ENCODE measurements at regions of chr11 and their contacts with region 1.

Region 1: GRCh38 chr11:27183672-27184457 is 143.2 kb downstream of the BBOX1 start:
- DNase-seq: peak in 1 of 2 donors; percentile 59
- ATAC-seq: peak in 7 of 8 donors; percentile 37 to 70 (median 42)
- H3K4me3 ChIP-seq: no peak overlapping the region
- H3K27ac ChIP-seq: no peak overlapping the region
- H3K4me1 ChIP-seq: peaks cover 0 to 7% (median 0%) of the 10 kb centered on the region in 9 donors
- H3K27me3 ChIP-seq: peaks cover 0 to 4% (median 0%) of the 10 kb centered on the region in 7 donors
- CTCF ChIP-seq: peak; percentile 61 to 84 (median 75)

Region 2: GRCh38 chr11:26878959-26879581 is 304.8 kb before region 1 on chr11:
- intact Hi-C with region 1: no loop called
- DNase-seq: no peak
- ATAC-seq: no peak
- H3K4me3 ChIP-seq: no peak overlapping the region
- H3K27ac ChIP-seq: no peak overlapping the region
- H3K4me1 ChIP-seq: no peaks in the 10 kb centered on the region
- H3K27me3 ChIP-seq: no peaks in the 10 kb centered on the region
- CTCF ChIP-seq: no peak

Region 3: GRCh38 chr11:27296497-27296896 is 112.6 kb after region 1 on chr11:
- intact Hi-C with region 1: loop called in 8 of 10 experiments (anchors 1 to 10 kb)
- DNase-seq: no peak
- ATAC-seq: peak in 4 of 8 donors; percentile 44 to 76 (median 65)
- H3K4me3 ChIP-seq: no peak overlapping the region
- H3K27ac ChIP-seq: peak overlapping the region in 4 of 10 donors; percentile 10 to 65 (median 45)
- H3K4me1 ChIP-seq: peaks cover 0 to 13% (median 0%) of the 10 kb centered on the region in 9 donors
- H3K27me3 ChIP-seq: no peaks in the 10 kb centered on the region
- CTCF ChIP-seq: peak in 8 of 9 donors; percentile 35 to 74 (median 62)

Region 4: GRCh38 chr11:27331981-27332380 is 148.1 kb after region 1 on chr11:
- intact Hi-C with region 1: no loop called
- DNase-seq: no peak
- ATAC-seq: no peak
- H3K4me3 ChIP-seq: no peak overlapping the region
- H3K27ac ChIP-seq: no peak overlapping the region
- H3K4me1 ChIP-seq: no peaks in the 10 kb centered on the region
- H3K27me3 ChIP-seq: no peaks in the 10 kb centered on the region
- CTCF ChIP-seq: no peak

Region 5: GRCh38 chr11:27357250-27357649 is 173.4 kb after region 1 on chr11:
- intact Hi-C with region 1: loop called in 1 of 10 experiments (anchors 5 kb)
- DNase-seq: no peak
- ATAC-seq: no peak
- H3K4me3 ChIP-seq: no peak overlapping the region
- H3K27ac ChIP-seq: no peak overlapping the region
- H3K4me1 ChIP-seq: peaks cover 0 to 14% (median 2%) of the 10 kb centered on the region in 9 donors
- H3K27me3 ChIP-seq: no peaks in the 10 kb centered on the region
- CTCF ChIP-seq: no peak

Region 6: GRCh38 chr11:27472398-27473016 is 288.6 kb after region 1 on chr11 and contains the start of gene LGR4:
- intact Hi-C with region 1: no loop called
- DNase-seq: peak; percentile 89 to 94
- ATAC-seq: peak; percentile 95 to 98 (median 96)
- H3K4me3 ChIP-seq: peak within 1 kb of the TSS; percentile 64 to 97 (median 82)
- H3K27ac ChIP-seq: peak within 1 kb of the TSS; percentile 82 to 97 (median 90)
- H3K4me1 ChIP-seq: peaks cover 0 to 46% (median 19%) of the 10 kb centered on the region in 9 donors
- H3K27me3 ChIP-seq: peaks cover 0 to 10% (median 0%) of the 10 kb centered on the region in 7 donors
- CTCF ChIP-seq: no peak
- total RNA-seq, gene LGR4: 13.6 to 41.0 (median 23.3) TPM

Region 7: DNA sequence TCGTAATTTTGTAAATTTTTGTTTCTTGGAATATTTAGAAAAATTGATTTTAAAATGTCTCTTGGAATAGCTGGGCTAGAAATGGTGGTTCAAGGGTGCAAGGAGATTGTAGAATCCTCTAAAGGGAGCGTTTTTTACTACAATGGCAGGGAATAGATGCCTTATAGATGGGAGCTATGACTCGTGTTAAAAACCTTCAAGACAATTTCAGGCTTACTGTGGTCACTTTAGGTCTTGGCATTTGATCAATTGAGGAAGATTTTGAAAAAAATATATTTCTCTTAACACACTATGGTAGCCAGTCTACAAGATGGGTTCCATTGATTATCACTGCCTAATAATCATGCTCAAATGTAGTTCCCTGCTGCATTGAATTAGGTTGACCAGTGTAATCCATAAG is 949.3 kb after region 1 on chr11:
- intact Hi-C with region 1: no loop called
- DNase-seq: no peak
- ATAC-seq: no peak
- H3K4me3 ChIP-seq: no peak overlapping the region
- H3K27ac ChIP-seq: no peak overlapping the region
- H3K4me1 ChIP-seq: no peaks in the 10 kb centered on the region
- H3K27me3 ChIP-seq: no peaks in the 10 kb centered on the region
- CTCF ChIP-seq: no peak